ENCODE measurements at regions of chr2 and their contacts with region 1.

Region 1: GRCh38 chr2:68553098-68553497 is 85.7 kb downstream of the APLF start:
- DNase-seq: no peak
- ATAC-seq: no peak
- H3K4me3 ChIP-seq: no peak overlapping the region
- H3K4me3 Mint-ChIP-seq: no peak overlapping the region
- H3K27ac ChIP-seq: no peak overlapping the region
- H3K27ac Mint-ChIP-seq: no peak overlapping the region
- H3K4me1 ChIP-seq: no peaks in the 10 kb centered on the region
- H3K4me1 Mint-ChIP-seq: no peaks in the 10 kb centered on the region
- H3K27me3 ChIP-seq: no peaks in the 10 kb centered on the region
- H3K27me3 Mint-ChIP-seq: peaks cover 0 to 6% (median 0%) of the 10 kb centered on the region in 5 donors

Region 2: GRCh38 chr2:68604077-68604476 is 51.0 kb after region 1 on chr2:
- CTCF ChIA-PET with region 1: no interaction called
- POLR2A ChIA-PET with region 1: no interaction called
- intact Hi-C with region 1: loop called in 1 of 2 experiments (anchors 5 kb)
- DNase-seq: no peak
- ATAC-seq: no peak
- H3K4me3 ChIP-seq: no peak overlapping the region
- H3K4me3 Mint-ChIP-seq: no peak overlapping the region
- H3K27ac ChIP-seq: no peak overlapping the region
- H3K27ac Mint-ChIP-seq: no peak overlapping the region
- H3K4me1 ChIP-seq: no peaks in the 10 kb centered on the region
- H3K4me1 Mint-ChIP-seq: peaks cover 0 to 7% (median 0%) of the 10 kb centered on the region in 7 donors
- H3K27me3 ChIP-seq: peaks cover 0 to 3% of the 10 kb centered on the region in 2 donors
- H3K27me3 Mint-ChIP-seq: peaks cover 0 to 32% (median 5%) of the 10 kb centered on the region in 5 donors

Measured in naive thymus-derived CD4-positive, alpha-beta T cell (primary cell).